AG04450 (cell line): ENCODE measurements at regions of chr2 and their contacts with region 1.

Region 1: GRCh38 chr2:173075781-173076580 is at the start of gene MAP3K20:
- DNase-seq: no peak
- H3K4me3 ChIP-seq: peak within 1 kb of the TSS; percentile 75
- H3K27ac ChIP-seq: peak within 1 kb of the TSS; percentile 86
- H3K27me3 ChIP-seq: no peaks in the 10 kb centered on the region
- CTCF ChIP-seq: peak; percentile 48
- polyA plus RNA-seq, gene MAP3K20: 59.8 and 74.6 TPM in 2 replicates

Region 2: GRCh38 chr2:172710584-172711024 is 365.4 kb before region 1 on chr2:
- CTCF ChIA-PET with region 1: no interaction called
- POLR2A ChIA-PET with region 1: no interaction called
- DNase-seq: peak; percentile 74
- H3K4me3 ChIP-seq: no peak overlapping the region
- H3K27ac ChIP-seq: no peak overlapping the region
- H3K27me3 ChIP-seq: no peaks in the 10 kb centered on the region
- CTCF ChIP-seq: peak; percentile 44

Region 3: GRCh38 chr2:172790404-172790803 is 285.6 kb before region 1 on chr2:
- CTCF ChIA-PET with region 1: no interaction called
- POLR2A ChIA-PET with region 1: no interaction called
- DNase-seq: no peak
- H3K4me3 ChIP-seq: no peak overlapping the region
- H3K27ac ChIP-seq: no peak overlapping the region
- H3K27me3 ChIP-seq: no peaks in the 10 kb centered on the region
- CTCF ChIP-seq: no peak

Region 4: DNA sequence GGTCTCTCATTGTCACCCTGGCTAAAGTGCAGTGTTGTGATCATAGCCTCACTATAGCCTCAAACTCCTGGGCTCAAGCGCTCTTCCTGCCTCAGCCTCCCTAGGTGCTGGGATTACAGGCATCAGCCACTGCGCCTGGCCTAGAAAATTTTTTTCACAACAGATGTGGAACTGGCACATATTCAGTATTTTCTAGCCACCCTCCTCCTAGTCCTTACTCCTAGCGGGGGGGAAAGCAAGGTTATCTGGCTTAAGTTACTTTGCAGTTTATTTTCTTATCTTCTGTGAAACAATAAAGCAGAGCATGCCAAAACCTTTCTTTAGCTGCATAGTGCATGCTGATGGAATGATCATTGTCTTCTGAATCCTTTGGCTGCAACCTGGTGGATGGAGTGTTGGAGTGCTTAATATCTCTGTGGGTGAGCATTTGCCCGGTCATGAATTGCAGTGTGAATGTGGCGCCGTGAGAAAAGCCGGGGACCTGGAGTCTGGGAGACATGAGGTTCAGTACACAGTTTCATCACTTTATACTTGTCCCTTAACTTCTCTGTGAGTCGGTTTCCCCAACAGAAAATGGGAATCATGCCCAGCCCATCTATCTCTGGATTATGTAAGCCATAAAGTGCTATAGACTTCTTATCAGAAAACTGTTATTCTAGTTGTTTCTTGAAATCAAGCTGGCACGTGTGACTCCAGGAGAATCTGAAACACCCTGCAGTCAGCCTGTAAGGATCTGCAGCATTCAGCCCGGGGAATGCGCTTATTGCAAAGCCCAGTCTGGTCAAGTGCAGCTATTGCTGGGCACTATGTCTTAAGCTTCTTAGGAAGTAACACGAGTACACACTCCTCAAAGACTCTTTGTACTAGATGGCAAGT is 38.5 kb before region 1 on chr2:
- CTCF ChIA-PET with region 1: no interaction called
- POLR2A ChIA-PET with region 1: interaction called, 10 read pairs
- DNase-seq: no peak
- H3K4me3 ChIP-seq: no peak overlapping the region
- H3K27ac ChIP-seq: no peak overlapping the region
- H3K27me3 ChIP-seq: no peaks in the 10 kb centered on the region
- CTCF ChIP-seq: no peak

Region 5: GRCh38 chr2:173090276-173090877 is 14.4 kb after region 1 on chr2:
- CTCF ChIA-PET with region 1: no interaction called
- POLR2A ChIA-PET with region 1: interaction called, 17 read pairs
- DNase-seq: no peak
- H3K4me3 ChIP-seq: peak overlapping the region; percentile 40
- H3K27ac ChIP-seq: peak overlapping the region; percentile 54
- H3K27me3 ChIP-seq: no peaks in the 10 kb centered on the region
- CTCF ChIP-seq: no peak

Region 6: GRCh38 chr2:173109253-173110188 is 33.5 kb after region 1 on chr2:
- CTCF ChIA-PET with region 1: no interaction called
- POLR2A ChIA-PET with region 1: interaction called, 11 read pairs
- DNase-seq: peak; percentile 62
- H3K4me3 ChIP-seq: no peak overlapping the region
- H3K27ac ChIP-seq: no peak overlapping the region
- H3K27me3 ChIP-seq: no peaks in the 10 kb centered on the region
- CTCF ChIP-seq: no peak